WTC11 (cell line): ENCODE measurements at regions of chr7 and their contacts with region 1.

Region 1: DNA sequence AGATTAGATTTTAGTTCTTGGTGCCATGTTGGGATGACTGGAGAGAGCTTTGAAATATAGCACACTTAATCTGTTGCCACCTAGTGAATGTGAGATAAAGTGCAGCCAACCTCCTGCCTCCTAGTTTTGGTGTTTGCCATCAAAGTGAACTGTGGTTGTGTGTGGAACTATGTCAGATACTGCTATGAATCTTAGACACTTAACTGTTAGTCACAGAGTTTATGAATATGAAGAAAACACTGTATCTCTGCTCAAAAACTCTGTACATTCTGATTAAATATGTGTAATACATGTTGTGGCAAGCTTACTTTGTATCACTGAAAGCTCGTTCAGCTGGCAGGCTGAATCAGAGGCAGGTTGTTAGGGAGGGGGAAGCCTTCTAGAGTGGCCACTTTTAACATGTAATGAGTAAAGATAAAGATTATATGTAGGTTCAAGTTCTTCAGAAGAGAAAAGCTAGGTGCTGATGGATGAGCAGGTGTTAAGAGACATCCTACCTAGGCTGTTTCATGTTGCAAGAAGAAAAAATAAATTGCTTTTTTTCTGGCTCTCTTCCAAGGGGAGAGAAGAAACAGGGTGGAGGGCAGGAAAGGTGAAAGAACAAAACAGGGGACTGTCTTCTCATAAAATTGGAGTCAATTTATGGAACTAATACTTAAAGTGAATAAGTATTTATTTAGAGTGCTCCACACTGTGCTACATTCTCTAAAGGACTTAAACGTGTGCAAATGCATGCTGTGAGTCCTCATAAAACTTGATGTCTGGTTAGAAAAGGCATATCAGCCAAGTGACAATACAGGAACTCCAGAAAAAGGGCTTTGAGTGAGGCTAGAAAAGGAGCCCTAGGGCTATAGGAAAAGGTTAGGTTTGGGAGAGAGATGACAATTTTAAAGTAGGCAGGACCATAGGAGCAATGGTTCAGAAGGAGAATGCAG is 14.1 kb upstream of the LAMB1 start:
- DNase-seq: no peak
- ATAC-seq: peak; percentile 90
- H3K4me3 Mint-ChIP-seq: no peak overlapping the region
- H3K27ac Mint-ChIP-seq: no peak overlapping the region
- H3K4me1 Mint-ChIP-seq: peaks cover 3% of the 10 kb centered on the region; the same call in 1 of the 2 replicates
- H3K27me3 Mint-ChIP-seq: no peaks in the 10 kb centered on the region
- CTCF ChIP-seq: 0 out of 2 replicates have a peak, but pooled peaks have one; percentile 16

Region 2: GRCh38 chr7:108002726-108003598 is 14.1 kb before region 1 on chr7 and contains the start of gene LAMB1:
- CTCF ChIA-PET with region 1: interaction called, 37 read pairs
- POLR2A ChIA-PET with region 1: no interaction called
- DNase-seq: peak; percentile 80
- ATAC-seq: peak; percentile 61
- H3K4me3 Mint-ChIP-seq: peak within 1 kb of the TSS; percentile 90
- H3K27ac Mint-ChIP-seq: no peak within 1 kb of the TSS
- H3K4me1 Mint-ChIP-seq: peaks cover 30% of the 10 kb centered on the region
- H3K27me3 Mint-ChIP-seq: peaks cover 69% of the 10 kb centered on the region
- CTCF ChIP-seq: no peak
- total RNA-seq, gene LAMB1: 77.8 to 101 TPM (median 78.4 TPM) in 3 replicates

Region 3: DNA sequence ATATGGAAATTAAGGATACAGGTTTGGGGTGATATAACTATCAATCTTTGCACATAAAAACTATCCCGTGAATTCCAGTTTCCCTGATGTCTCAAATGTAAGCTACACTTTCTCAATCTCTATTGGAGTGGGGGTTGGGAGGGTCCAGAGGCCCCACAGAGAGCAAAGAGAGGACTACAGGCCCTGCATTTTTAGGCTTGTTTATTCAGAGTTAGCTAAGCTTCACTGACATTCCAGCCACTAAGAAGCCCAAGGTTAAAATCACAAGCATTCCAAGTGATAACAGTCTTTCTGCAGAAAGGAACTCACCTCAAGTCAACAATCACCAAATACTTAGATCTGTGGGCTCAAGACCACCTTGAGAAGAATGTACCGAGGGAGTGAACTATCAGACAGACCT is 17.5 kb after region 1 on chr7:
- CTCF ChIA-PET with region 1: interaction called, 18 read pairs
- POLR2A ChIA-PET with region 1: no interaction called
- DNase-seq: no peak
- ATAC-seq: peak; percentile 94
- H3K4me3 Mint-ChIP-seq: peak overlapping the region; percentile 3; the same call in 1 of the 2 replicates
- H3K27ac Mint-ChIP-seq: peak overlapping the region; percentile 87
- H3K4me1 Mint-ChIP-seq: peaks cover 22% of the 10 kb centered on the region
- H3K27me3 Mint-ChIP-seq: no peaks in the 10 kb centered on the region
- CTCF ChIP-seq: no peak

Region 4: GRCh38 chr7:108124820-108125219 is 107.7 kb after region 1 on chr7:
- CTCF ChIA-PET with region 1: no interaction called
- POLR2A ChIA-PET with region 1: no interaction called
- DNase-seq: no peak
- ATAC-seq: no peak
- H3K4me3 Mint-ChIP-seq: no peak overlapping the region
- H3K27ac Mint-ChIP-seq: no peak overlapping the region
- H3K4me1 Mint-ChIP-seq: no peaks in the 10 kb centered on the region
- H3K27me3 Mint-ChIP-seq: no peaks in the 10 kb centered on the region
- CTCF ChIP-seq: no peak

Region 5: DNA sequence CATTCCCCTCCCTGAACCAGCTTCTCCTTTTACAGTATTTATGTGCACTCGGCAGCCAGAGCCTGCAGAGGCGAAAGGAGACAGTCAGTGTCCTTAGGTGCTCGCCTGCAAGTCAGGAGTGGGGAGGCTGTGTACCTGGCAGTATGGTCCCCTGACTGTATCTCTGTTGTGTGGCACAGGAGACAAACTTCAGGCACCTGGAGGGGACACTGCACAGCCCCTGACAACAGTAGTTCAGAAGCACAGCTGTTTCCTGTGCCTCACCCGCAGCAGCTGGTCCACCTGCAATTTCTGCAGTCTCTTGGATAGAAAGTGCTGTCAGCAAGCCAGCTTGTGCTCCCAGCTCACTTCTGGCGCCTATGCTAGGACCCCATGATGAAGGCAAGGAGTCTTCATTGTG is 186.4 kb after region 1 on chr7:
- CTCF ChIA-PET with region 1: no interaction called
- POLR2A ChIA-PET with region 1: no interaction called
- DNase-seq: no peak
- ATAC-seq: peak; percentile 58
- H3K4me3 Mint-ChIP-seq: no peak overlapping the region
- H3K27ac Mint-ChIP-seq: no peak overlapping the region
- H3K4me1 Mint-ChIP-seq: peaks cover 25% of the 10 kb centered on the region
- H3K27me3 Mint-ChIP-seq: no peaks in the 10 kb centered on the region; the same call in 1 of the 2 replicates
- CTCF ChIP-seq: no peak